ENCODE measurements at regions of chr4 and their contacts with region 1.

Region 1: DNA sequence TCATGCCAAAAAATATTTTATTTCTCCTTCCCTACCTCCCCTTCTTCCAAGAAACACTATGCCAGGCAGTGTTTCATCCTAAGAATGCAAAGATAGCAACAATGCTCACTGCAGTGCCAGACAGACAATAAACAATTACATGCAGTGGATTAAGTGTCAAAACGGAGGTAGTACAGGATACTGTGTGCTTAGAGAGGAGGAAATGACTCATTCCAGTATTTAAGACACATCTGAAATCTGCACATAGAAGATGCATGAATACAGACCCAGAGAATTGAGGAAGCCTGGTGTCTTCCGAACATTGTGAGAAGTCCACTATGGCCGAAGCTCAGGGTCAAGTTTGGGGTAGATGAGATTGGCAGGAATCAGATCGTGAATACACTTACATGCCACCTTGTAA is 326.4 kb downstream of the PPP3CA start:
- DNase-seq: no peak
- H3K4me3 Mint-ChIP-seq: no peak overlapping the region
- H3K27ac Mint-ChIP-seq: no peak overlapping the region
- H3K4me1 Mint-ChIP-seq: peaks cover 27% of the 10 kb centered on the region
- H3K27me3 Mint-ChIP-seq: peaks cover 4% of the 10 kb centered on the region

Region 2: DNA sequence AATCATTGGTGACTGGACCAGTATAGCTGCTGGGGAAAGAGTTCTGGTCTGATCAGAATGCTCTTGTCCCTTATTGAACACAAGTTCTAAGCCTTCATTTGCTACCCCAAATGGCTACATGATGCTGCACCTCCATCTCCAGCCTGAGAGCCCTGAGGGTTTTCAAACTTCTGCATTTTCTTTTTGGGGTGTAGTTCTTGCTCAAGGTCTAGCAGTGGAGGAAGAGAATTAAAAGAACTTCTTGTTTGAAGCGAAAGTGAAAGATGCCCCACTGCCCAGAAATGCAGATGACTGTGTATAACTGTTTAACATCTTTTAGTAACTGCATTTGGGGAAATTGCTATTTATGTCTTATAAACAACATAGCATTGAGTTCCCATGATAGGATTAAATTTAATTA is 1165.3 kb before region 1 on chr4:
- CTCF ChIA-PET with region 1: no interaction called
- intact Hi-C with region 1: loop called (anchors 5 kb)
- DNase-seq: peak; percentile 43
- H3K4me3 Mint-ChIP-seq: no peak overlapping the region
- H3K27ac Mint-ChIP-seq: peak overlapping the region; percentile 74
- H3K4me1 Mint-ChIP-seq: peaks cover 66% of the 10 kb centered on the region
- H3K27me3 Mint-ChIP-seq: no peaks in the 10 kb centered on the region

Region 3: GRCh38 chr4:100569196-100569595 is 451.8 kb before region 1 on chr4:
- CTCF ChIA-PET with region 1: no interaction called
- intact Hi-C with region 1: loop called (anchors 5 kb)
- DNase-seq: peak; percentile 26
- H3K4me3 Mint-ChIP-seq: no peak overlapping the region
- H3K27ac Mint-ChIP-seq: peak overlapping the region; percentile 59
- H3K4me1 Mint-ChIP-seq: peaks cover 21% of the 10 kb centered on the region
- H3K27me3 Mint-ChIP-seq: peaks cover 2% of the 10 kb centered on the region

Region 4: GRCh38 chr4:100981447-100982204 is 39.3 kb before region 1 on chr4:
- CTCF ChIA-PET with region 1: no interaction called
- intact Hi-C with region 1: no loop called
- DNase-seq: no peak
- H3K4me3 Mint-ChIP-seq: no peak overlapping the region
- H3K27ac Mint-ChIP-seq: no peak overlapping the region
- H3K4me1 Mint-ChIP-seq: no peaks in the 10 kb centered on the region
- H3K27me3 Mint-ChIP-seq: no peaks in the 10 kb centered on the region

Region 5: GRCh38 chr4:101000496-101000895 is 20.5 kb before region 1 on chr4:
- CTCF ChIA-PET with region 1: no interaction called
- intact Hi-C with region 1: no loop called
- DNase-seq: no peak
- H3K4me3 Mint-ChIP-seq: no peak overlapping the region
- H3K27ac Mint-ChIP-seq: no peak overlapping the region
- H3K4me1 Mint-ChIP-seq: no peaks in the 10 kb centered on the region
- H3K27me3 Mint-ChIP-seq: no peaks in the 10 kb centered on the region

Region 6: DNA sequence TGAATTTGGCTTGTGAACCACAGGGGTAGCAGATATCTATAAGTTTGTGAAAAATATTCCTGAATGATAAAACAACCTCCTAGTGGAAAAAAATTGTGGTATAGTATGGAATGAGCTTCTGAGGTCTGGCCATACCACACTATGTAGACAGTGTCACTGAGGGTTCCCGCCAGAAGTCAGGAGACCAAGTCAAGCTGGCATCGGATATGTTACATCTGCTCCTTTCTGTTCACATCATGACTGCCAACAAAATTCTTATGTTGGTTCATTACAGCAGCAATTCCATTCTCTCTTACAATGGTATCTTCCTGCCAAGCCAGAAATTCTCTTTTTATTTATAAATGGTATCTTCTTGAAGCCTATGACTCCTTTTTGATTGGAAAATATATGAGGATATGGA is 53.4 kb after region 1 on chr4:
- CTCF ChIA-PET with region 1: no interaction called
- intact Hi-C with region 1: loop called (anchors 2 kb)
- DNase-seq: no peak
- H3K4me3 Mint-ChIP-seq: no peak overlapping the region
- H3K27ac Mint-ChIP-seq: no peak overlapping the region
- H3K4me1 Mint-ChIP-seq: peaks cover 5% of the 10 kb centered on the region
- H3K27me3 Mint-ChIP-seq: no peaks in the 10 kb centered on the region

Region 7: DNA sequence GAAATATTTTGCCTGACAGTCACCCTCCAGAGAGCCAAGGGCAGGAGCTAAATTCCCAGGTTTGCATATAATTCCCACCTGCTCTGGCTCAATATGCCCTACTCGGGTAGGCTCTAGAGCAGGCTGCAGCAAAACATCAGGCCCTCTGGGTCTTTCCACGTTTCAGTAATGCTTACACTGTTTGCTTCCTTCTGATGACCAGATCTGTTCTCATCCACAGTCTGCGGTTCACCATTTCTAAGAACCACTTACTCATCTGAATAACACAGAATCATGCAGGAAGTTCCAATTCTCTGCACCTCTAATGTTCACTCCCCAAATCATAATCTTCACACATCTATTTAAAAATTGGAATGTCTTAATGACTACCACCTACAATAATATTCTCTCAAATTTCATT is 185.0 kb after region 1 on chr4:
- CTCF ChIA-PET with region 1: no interaction called
- intact Hi-C with region 1: loop called (anchors 1 kb)
- DNase-seq: peak; percentile 60
- H3K4me3 Mint-ChIP-seq: no peak overlapping the region
- H3K27ac Mint-ChIP-seq: no peak overlapping the region
- H3K4me1 Mint-ChIP-seq: peaks cover 24% of the 10 kb centered on the region
- H3K27me3 Mint-ChIP-seq: no peaks in the 10 kb centered on the region

Region 8: DNA sequence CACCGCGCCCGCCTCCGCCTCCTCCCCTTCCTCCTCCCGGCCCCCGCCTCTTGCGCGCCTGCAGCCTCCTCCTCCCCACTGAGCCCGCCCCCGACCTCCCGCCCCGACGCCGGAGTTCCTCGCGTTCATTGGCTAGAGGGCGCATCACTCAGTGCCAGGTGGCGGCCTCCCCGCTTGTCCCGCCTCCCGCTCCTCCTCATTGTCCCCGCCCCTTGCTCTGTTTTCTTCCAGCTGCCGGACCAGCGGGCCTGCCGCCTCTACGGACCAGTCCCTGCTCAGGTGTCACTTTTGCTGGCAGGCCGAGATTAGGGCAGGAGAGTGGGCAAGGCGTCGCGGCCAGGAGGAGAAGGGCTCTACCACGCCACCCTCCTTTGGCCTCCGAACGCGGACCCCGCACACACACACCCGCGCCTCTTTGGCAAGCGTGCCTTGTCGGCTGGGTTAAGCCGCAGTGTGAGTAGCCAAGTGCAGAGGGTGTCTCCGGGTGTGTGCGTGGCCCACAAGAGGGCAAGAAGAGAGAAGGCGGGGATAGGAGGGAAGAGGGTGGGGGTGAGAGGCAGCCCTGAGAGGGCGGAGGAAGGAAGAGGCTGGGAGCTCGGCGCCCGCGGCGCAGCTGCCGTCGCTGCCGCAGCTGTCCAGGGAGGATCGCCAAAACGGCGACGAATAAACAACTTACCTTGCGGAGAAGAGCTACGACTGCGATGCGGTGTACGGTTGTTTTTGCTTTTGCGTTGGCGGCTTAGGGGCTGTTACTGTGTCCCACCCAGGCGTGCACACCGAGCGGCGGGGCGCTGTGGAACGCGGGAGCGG is 326.8 kb after region 1 on chr4:
- CTCF ChIA-PET with region 1: no interaction called
- intact Hi-C with region 1: loop called (anchors 1 kb)
- DNase-seq: peak; percentile 99
- H3K4me3 Mint-ChIP-seq: peak overlapping the region; percentile 95
- H3K27ac Mint-ChIP-seq: peak overlapping the region; percentile 82
- H3K4me1 Mint-ChIP-seq: peaks cover 22% of the 10 kb centered on the region
- H3K27me3 Mint-ChIP-seq: peaks cover 31% of the 10 kb centered on the region

Region 9: GRCh38 chr4:102007959-102008425 is 987.0 kb after region 1 on chr4:
- CTCF ChIA-PET with region 1: no interaction called
- intact Hi-C with region 1: loop called (anchors 2 kb)
- DNase-seq: peak; percentile 26
- H3K4me3 Mint-ChIP-seq: no peak overlapping the region
- H3K27ac Mint-ChIP-seq: no peak overlapping the region
- H3K4me1 Mint-ChIP-seq: peaks cover 7% of the 10 kb centered on the region
- H3K27me3 Mint-ChIP-seq: no peaks in the 10 kb centered on the region

Measured in activated naive CD4-positive, alpha-beta T cell treated with anti-CD3 and anti-CD28 coated beads for 36 hours (primary cell).